ENCODE measurements at regions of chr11 and their contacts with region 1.

Region 1: GRCh38 chr11:96149743-96150555 is 193.0 kb downstream of the MAML2 start:
- DNase-seq: no peak
- ATAC-seq: peak; percentile 81
- H3K4me3 Mint-ChIP-seq: no peak overlapping the region
- H3K27ac Mint-ChIP-seq: no peak overlapping the region
- H3K4me1 Mint-ChIP-seq: peaks cover 53% of the 10 kb centered on the region
- H3K27me3 Mint-ChIP-seq: no peaks in the 10 kb centered on the region

Region 2: DNA sequence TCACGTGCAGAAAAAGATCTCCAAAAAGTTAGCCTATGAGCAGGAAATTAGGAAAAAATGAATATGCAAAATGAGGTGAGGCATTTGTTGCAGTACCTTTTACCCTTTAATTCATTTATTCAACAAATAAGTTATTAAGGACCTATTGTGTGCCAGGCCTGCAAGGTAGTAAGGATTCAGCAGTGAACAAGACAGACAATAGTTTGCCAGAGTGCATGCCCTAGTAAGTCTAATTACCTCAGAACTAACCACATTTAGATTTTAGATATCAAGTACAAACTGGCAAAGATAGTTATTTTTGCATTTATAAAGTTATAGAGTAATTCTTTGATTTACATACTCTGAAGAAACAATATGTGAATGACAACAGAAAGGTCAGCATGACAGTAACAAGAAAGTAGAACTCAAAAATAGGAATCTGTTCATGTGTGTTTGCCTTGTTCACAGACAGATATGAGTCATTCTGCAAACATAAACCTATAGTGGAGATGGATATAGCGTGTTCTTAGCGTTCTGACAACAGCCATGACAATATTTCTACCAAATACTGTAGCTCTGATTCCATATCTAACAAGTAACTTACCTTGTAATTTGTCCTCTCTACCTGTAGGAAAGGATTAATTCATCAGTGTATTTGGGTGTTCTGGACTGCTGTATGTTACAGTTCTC is 17.7 kb before region 1 on chr11:
- CTCF ChIA-PET with region 1: interaction called, 4 read pairs
- POLR2A ChIA-PET with region 1: interaction called, 3 read pairs
- intact Hi-C with region 1: loop called in 1 of 2 experiments (anchors 2 kb)
- DNase-seq: no peak
- ATAC-seq: peak; percentile 65
- H3K4me3 Mint-ChIP-seq: no peak overlapping the region
- H3K27ac Mint-ChIP-seq: no peak overlapping the region
- H3K4me1 Mint-ChIP-seq: peaks cover 73% of the 10 kb centered on the region
- H3K27me3 Mint-ChIP-seq: no peaks in the 10 kb centered on the region

Measured in activated CD4-positive, alpha-beta T cell treated with anti-CD3 and anti-CD28 coated beads for 36 hours (primary cell).